Lower lobe of right lung (tissue), 2 donors: ENCODE measurements at regions of chr2 and their contacts with region 1.

Region 1: DNA sequence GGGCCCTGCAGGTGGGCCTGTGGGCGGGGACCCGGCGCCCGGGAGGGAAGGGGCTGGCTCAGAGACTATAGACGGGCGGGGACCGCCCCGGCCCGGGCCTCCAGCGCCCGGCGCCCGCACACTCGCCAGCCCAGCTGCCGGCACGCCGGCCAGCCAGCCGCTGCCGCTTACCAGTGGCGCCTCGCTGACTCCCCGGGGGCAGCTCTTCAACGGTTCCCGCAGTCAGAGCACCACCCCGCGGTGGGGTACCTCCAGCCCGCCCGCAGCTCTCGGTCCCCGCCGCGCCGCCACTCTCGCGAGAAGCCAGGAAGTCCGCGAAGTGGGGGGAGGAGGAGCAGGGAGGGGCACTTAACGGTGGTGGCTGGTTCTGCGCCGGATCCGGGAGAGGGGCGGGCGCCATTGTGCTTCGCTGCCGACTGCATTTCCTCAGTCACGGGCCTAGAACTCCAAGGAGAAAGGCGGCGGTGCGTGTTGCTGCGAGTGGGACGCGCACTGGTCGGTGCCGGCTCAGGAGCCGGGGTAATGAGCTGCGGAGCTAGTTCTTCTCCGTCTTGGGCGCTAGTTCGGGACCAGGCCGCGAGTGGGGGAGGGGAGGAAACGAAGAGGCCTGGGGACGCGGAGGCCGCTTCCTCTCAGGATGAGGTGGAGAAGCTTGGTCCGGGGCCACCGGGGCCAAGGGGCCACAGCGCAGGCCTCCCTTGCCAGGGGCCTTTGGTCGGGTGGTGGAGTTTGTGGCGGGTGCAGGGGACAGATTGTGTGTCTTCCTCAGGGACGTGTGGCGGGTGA is at the start of gene MARCHF7:
- DNase-seq: peak; percentile 97
- ATAC-seq: peak; percentile 99
- H3K4me3 ChIP-seq: peak within 1 kb of the TSS; percentile 97
- H3K27ac ChIP-seq: peak within 1 kb of the TSS; percentile 99
- H3K4me1 ChIP-seq: peaks cover 53% of the 10 kb centered on the region
- H3K27me3 ChIP-seq: no peaks in the 10 kb centered on the region
- CTCF ChIP-seq: peak; percentile 67
- total RNA-seq, gene MARCHF7: 71.8 TPM

Region 2: DNA sequence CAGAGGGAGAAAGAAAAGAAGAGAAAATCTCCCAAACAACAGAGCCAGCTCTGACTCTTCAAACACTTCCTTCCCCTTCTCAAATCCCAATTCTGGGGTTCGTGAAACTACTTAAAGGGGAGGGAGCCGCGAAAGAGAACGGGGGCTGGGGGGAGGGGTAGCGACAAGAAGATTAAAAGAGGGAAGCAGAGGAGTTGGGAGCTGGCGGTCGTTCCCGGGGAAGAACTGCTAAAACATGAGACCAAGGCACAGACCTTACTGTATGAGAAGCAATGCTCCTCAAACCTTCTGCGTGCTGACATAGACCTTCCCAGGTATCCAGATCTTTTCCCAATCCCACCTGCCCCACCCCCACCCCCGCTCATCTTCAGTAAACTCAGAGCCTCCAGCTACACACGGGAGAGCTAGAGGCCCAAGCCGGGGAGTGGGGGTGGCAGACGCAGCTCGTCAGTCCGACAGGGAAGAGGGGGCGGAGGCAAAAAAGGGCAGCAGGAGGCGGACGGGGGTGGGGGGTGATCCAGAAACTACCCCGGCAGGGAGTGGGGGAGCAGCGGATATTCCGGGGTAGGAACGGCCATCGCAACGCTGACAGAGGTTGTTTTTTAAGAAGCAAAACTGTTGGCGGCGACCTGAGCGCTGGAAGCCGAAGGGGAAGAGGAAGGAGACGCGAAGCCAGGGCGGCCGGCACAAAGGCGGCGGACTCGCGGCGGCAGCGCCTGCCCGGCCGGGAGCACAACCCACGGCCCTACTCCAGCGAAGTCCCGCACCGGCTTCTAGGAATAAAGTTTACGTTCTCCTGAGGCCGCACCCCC is 97.0 kb before region 1 on chr2:
- intact Hi-C with region 1: loop called (anchors 10 kb)
- DNase-seq: peak; percentile 94
- ATAC-seq: peak; percentile 96 to 98
- H3K4me3 ChIP-seq: peak overlapping the region; percentile 67
- H3K27ac ChIP-seq: peak overlapping the region; percentile 98
- H3K4me1 ChIP-seq: peaks cover 33% of the 10 kb centered on the region
- H3K27me3 ChIP-seq: no peaks in the 10 kb centered on the region
- CTCF ChIP-seq: no peak